ENCODE measurements at regions of chr11 and their contacts with region 1.

Region 1: GRCh38 chr11:86138958-86139357 is 70.1 kb upstream of the PICALM start:
- DNase-seq: no peak
- H3K4me3 ChIP-seq: no peak overlapping the region
- H3K4me3 Mint-ChIP-seq: no peak overlapping the region
- H3K27ac Mint-ChIP-seq: no peak overlapping the region
- H3K4me1 ChIP-seq: peaks cover 42% of the 10 kb centered on the region
- H3K4me1 Mint-ChIP-seq: peaks cover 18% of the 10 kb centered on the region
- H3K27me3 ChIP-seq: no peaks in the 10 kb centered on the region
- H3K27me3 Mint-ChIP-seq: no peaks in the 10 kb centered on the region
- CTCF ChIP-seq: no peak

Region 2: GRCh38 chr11:86052693-86053641 is 86.0 kb before region 1 on chr11:
- CTCF ChIA-PET with region 1: interaction called, 3 read pairs
- POLR2A ChIA-PET with region 1: no interaction called
- intact Hi-C with region 1: loop called (anchors 1 kb)
- DNase-seq: peak; percentile 65 to 75
- H3K4me3 ChIP-seq: no peak overlapping the region
- H3K4me3 Mint-ChIP-seq: peak overlapping the region; percentile 22
- H3K27ac Mint-ChIP-seq: peak overlapping the region; percentile 29
- H3K4me1 ChIP-seq: peaks cover 29% of the 10 kb centered on the region
- H3K4me1 Mint-ChIP-seq: peaks cover 26% of the 10 kb centered on the region
- H3K27me3 ChIP-seq: no peaks in the 10 kb centered on the region
- H3K27me3 Mint-ChIP-seq: no peaks in the 10 kb centered on the region
- CTCF ChIP-seq: no peak

Region 3: GRCh38 chr11:86101941-86102407 is 37.0 kb before region 1 on chr11:
- CTCF ChIA-PET with region 1: no interaction called
- POLR2A ChIA-PET with region 1: no interaction called
- intact Hi-C with region 1: no loop called
- DNase-seq: no peak
- H3K4me3 ChIP-seq: no peak overlapping the region
- H3K4me3 Mint-ChIP-seq: no peak overlapping the region
- H3K27ac Mint-ChIP-seq: no peak overlapping the region
- H3K4me1 ChIP-seq: peaks cover 6% of the 10 kb centered on the region
- H3K4me1 Mint-ChIP-seq: no peaks in the 10 kb centered on the region
- H3K27me3 ChIP-seq: no peaks in the 10 kb centered on the region
- H3K27me3 Mint-ChIP-seq: no peaks in the 10 kb centered on the region
- CTCF ChIP-seq: no peak

Region 4: DNA sequence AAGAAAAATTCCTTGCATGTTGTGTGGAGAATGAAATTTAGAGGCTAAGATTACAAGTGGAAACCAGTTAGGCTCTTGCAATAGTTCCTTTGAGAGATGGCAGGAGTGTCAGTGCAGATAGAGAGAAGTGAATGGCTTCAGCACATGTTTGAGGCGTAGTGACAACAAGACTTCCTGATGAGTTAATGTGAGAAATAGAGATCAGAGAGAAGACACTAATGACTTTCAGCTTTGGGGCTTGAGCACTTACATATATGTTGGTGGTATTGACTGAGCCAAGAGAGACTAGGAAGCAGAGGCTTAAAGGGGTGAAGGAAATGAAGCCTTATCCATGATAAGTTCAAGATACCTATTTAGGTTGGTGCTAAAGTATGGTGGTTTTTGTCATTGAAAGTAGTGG is 14.1 kb before region 1 on chr11:
- CTCF ChIA-PET with region 1: interaction called, 3 read pairs
- POLR2A ChIA-PET with region 1: interaction called, 3 read pairs
- intact Hi-C with region 1: loop called (anchors 1 kb)
- DNase-seq: no peak
- H3K4me3 ChIP-seq: peak overlapping the region; percentile 0; the same call in 1 of the 2 replicates
- H3K4me3 Mint-ChIP-seq: peak overlapping the region; percentile 57
- H3K27ac Mint-ChIP-seq: peak overlapping the region; percentile 60
- H3K4me1 ChIP-seq: peaks cover 94% of the 10 kb centered on the region
- H3K4me1 Mint-ChIP-seq: peaks cover 63% of the 10 kb centered on the region
- H3K27me3 ChIP-seq: no peaks in the 10 kb centered on the region
- H3K27me3 Mint-ChIP-seq: no peaks in the 10 kb centered on the region
- CTCF ChIP-seq: no peak

Region 5: GRCh38 chr11:86160546-86161149 is 21.7 kb after region 1 on chr11:
- CTCF ChIA-PET with region 1: interaction called, 3 read pairs
- POLR2A ChIA-PET with region 1: interaction called, 3 read pairs
- intact Hi-C with region 1: loop called (anchors 1 kb)
- DNase-seq: peak; percentile 83 to 89
- H3K4me3 ChIP-seq: no peak overlapping the region
- H3K4me3 Mint-ChIP-seq: no peak overlapping the region
- H3K27ac Mint-ChIP-seq: peak overlapping the region; percentile 7
- H3K4me1 ChIP-seq: peaks cover 67% of the 10 kb centered on the region
- H3K4me1 Mint-ChIP-seq: peaks cover 62% of the 10 kb centered on the region
- H3K27me3 ChIP-seq: no peaks in the 10 kb centered on the region
- H3K27me3 Mint-ChIP-seq: no peaks in the 10 kb centered on the region
- CTCF ChIP-seq: no peak

Measured in Caco-2 (cell line).